T-cell (primary cell): ENCODE measurements at regions of chr12 and their contacts with region 1.

Region 1: GRCh38 chr12:114684098-114684869 is at the start of gene TBX3:
- DNase-seq: peak in 27 of 35 experiments; percentile 2 to 41 (median 16)
- ATAC-seq: peak in 3 of 4 experiments; percentile 37 to 88 (median 68)
- H3K4me3 ChIP-seq: peak within 1 kb of the TSS; percentile 22 to 67
- H3K4me3 Mint-ChIP-seq: peak within 1 kb of the TSS; percentile 73 to 93 (median 79)
- H3K27ac ChIP-seq: no peak within 1 kb of the TSS
- H3K27ac Mint-ChIP-seq: peak within 1 kb of the TSS in 1 of 2 donors; percentile 77
- H3K4me1 ChIP-seq: peaks cover 0 to 33% of the 10 kb centered on the region in 2 experiments
- H3K4me1 Mint-ChIP-seq: peaks cover 40 to 43% (median 41%) of the 10 kb centered on the region in 3 donors
- H3K27me3 ChIP-seq: peaks cover 29 to 76% of the 10 kb centered on the region in 2 experiments
- H3K27me3 Mint-ChIP-seq: peaks cover 80 to 95% of the 10 kb centered on the region in 2 donors
- total RNA-seq, gene TBX3: 0.26 to 0.44 (median 0.41) TPM in 3 of 5 donors, not detected in the others

Region 2: GRCh38 chr12:113965951-113966797 is 718.1 kb before region 1 on chr12 and contains the start of gene RBM19:
- CTCF ChIA-PET with region 1: no interaction called
- POLR2A ChIA-PET with region 1: no interaction called
- DNase-seq: peak; percentile 93 to 99 (median 96)
- ATAC-seq: peak; percentile 97 to 99 (median 99)
- H3K4me3 ChIP-seq: peak within 1 kb of the TSS; percentile 89 to 99
- H3K4me3 Mint-ChIP-seq: peak within 1 kb of the TSS; percentile 93 to 99 (median 94)
- H3K27ac ChIP-seq: peak within 1 kb of the TSS; percentile 46
- H3K27ac Mint-ChIP-seq: peak within 1 kb of the TSS; percentile 84 to 92
- H3K4me1 ChIP-seq: peaks cover 9 to 18% of the 10 kb centered on the region in 2 experiments
- H3K4me1 Mint-ChIP-seq: peaks cover 46 to 55% (median 52%) of the 10 kb centered on the region in 3 donors
- H3K27me3 ChIP-seq: peaks cover 2 to 6% of the 10 kb centered on the region in 2 experiments
- H3K27me3 Mint-ChIP-seq: peaks cover 3 to 10% of the 10 kb centered on the region in 2 donors
- total RNA-seq, gene RBM19: 57.9 to 80.3 (median 78.3) TPM

Region 3: GRCh38 chr12:114152890-114153289 is 531.4 kb before region 1 on chr12:
- CTCF ChIA-PET with region 1: no interaction called
- POLR2A ChIA-PET with region 1: no interaction called
- DNase-seq: no peak
- ATAC-seq: no peak
- H3K4me3 ChIP-seq: no peak overlapping the region
- H3K4me3 Mint-ChIP-seq: no peak overlapping the region
- H3K27ac ChIP-seq: no peak overlapping the region
- H3K27ac Mint-ChIP-seq: no peak overlapping the region
- H3K4me1 ChIP-seq: no peaks in the 10 kb centered on the region
- H3K4me1 Mint-ChIP-seq: no peaks in the 10 kb centered on the region
- H3K27me3 ChIP-seq: no peaks in the 10 kb centered on the region
- H3K27me3 Mint-ChIP-seq: peaks cover 0 to 5% of the 10 kb centered on the region in 2 donors

Region 4: DNA sequence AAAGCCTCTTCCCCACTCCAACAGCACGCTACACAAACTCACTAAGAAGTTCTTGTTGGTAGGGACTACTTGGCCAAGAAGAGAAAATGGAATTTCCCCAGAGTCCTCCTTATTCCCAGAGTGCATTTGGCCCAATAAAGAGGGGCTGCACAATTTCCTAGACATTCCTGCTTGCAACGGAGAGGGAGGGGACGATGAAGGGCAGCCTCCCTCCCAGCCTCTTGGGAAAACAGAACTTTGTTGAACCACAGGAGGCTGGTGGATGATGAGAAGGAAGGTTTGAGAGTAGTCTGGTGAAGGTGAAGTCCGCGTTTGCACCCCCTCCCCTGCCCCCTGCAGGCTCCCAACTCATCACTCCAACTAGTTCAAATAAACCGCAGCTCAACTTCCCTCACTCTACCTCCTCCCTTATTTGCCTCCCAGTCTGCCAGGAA is 18.8 kb after region 1 on chr12:
- CTCF ChIA-PET with region 1: no interaction called
- POLR2A ChIA-PET with region 1: interaction called in 1 of 2 experiments, 10 read pairs
- DNase-seq: no peak
- ATAC-seq: no peak
- H3K4me3 ChIP-seq: no peak overlapping the region
- H3K4me3 Mint-ChIP-seq: no peak overlapping the region
- H3K27ac ChIP-seq: no peak overlapping the region
- H3K27ac Mint-ChIP-seq: no peak overlapping the region
- H3K4me1 ChIP-seq: no peaks in the 10 kb centered on the region
- H3K4me1 Mint-ChIP-seq: no peaks in the 10 kb centered on the region
- H3K27me3 ChIP-seq: peaks cover 13 to 63% of the 10 kb centered on the region in 2 experiments
- H3K27me3 Mint-ChIP-seq: peaks cover 49 to 66% of the 10 kb centered on the region in 2 donors